CD8-positive, alpha-beta T cell (primary cell): ENCODE measurements at regions of chr1 and their contacts with region 1.

Region 1: DNA sequence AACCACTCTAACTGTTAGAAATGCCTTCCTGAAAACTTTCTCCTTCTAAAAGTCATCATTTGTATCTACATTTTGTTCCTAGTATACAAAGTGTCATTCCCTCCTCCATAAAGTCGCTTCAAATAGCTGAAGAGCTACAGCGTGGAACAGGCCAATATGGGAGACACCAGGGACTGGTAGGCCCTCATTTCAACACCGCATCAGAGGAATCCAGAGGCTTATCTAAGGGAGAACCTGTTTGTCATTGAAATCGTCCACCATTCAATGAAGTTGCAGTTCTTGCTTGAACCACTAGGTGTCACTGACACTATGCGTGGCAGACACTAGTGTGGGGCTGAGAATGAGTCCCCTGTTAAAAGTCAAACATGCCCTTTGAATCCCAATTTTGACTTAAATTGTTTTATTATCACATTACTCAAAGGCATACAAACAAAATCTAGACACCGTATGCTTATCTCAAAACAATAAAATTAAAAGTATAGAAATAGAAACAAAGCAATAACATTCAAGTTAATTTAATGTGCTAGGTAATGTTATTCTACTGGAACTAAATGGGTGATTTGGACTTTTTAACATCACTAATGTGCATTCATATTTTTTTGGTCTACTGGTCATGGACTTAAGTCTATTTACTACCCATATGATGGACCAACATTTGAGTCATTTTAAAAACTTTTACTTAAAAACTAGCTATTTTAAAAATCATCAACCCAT is 182.3 kb downstream of the FCRL5 start:
- DNase-seq: peak in 7 of 9 experiments; percentile 3 to 60 (median 35)
- ATAC-seq: no peak
- H3K4me3 ChIP-seq: no peak overlapping the region
- H3K4me3 Mint-ChIP-seq: no peak overlapping the region
- H3K27ac ChIP-seq: no peak overlapping the region
- H3K27ac Mint-ChIP-seq: no peak overlapping the region
- H3K4me1 ChIP-seq: no peaks in the 10 kb centered on the region
- H3K4me1 Mint-ChIP-seq: no peaks in the 10 kb centered on the region
- H3K27me3 ChIP-seq: no peaks in the 10 kb centered on the region
- H3K27me3 Mint-ChIP-seq: peaks cover 8% of the 10 kb centered on the region
- CTCF ChIP-seq: peak; percentile 83

Region 2: DNA sequence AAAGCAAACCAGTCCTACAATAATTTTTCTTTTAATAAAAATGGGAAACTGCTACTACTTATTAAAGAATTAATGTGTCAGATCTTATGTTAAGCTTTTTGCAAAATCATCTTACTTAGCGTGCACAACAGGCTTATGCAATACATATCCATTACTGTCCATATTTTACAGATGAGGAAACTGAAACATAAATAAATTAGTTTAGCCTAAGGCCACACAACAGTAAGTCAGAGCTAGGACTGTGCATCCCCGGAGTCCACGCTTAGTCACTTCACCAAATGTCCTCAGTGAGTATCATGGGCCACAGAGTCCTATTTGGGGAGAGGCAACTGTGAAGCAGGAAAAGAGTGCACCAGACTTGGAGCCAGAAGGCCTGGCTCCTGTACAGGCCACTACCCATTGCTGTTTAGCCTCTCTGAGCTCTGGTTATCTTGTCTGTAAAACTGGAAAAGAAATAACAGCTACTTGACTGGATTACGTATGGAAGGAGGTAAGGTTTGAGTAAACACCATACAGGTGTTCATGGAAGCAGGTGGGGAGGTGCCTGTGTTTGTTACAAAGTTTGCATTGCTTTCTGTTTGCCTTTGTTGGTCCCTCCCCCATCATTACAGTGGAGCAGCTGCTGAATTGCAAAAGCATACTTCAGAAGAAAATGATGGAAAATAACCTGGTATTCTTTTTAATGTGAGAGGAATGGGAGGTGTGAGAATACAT is 10.5 kb before region 1 on chr1:
- CTCF ChIA-PET with region 1: interaction called, 10 read pairs
- POLR2A ChIA-PET with region 1: no interaction called
- intact Hi-C with region 1: no loop called
- DNase-seq: no peak
- ATAC-seq: no peak
- H3K4me3 ChIP-seq: no peak overlapping the region
- H3K4me3 Mint-ChIP-seq: no peak overlapping the region
- H3K27ac ChIP-seq: no peak overlapping the region
- H3K27ac Mint-ChIP-seq: no peak overlapping the region
- H3K4me1 ChIP-seq: no peaks in the 10 kb centered on the region
- H3K4me1 Mint-ChIP-seq: no peaks in the 10 kb centered on the region
- H3K27me3 ChIP-seq: no peaks in the 10 kb centered on the region
- H3K27me3 Mint-ChIP-seq: peaks cover 4% of the 10 kb centered on the region
- CTCF ChIP-seq: no peak